GM18951 (cell line): ENCODE measurements at regions of chr4 and their contacts with region 1.

Region 1: GRCh38 chr4:129362674-129363274 is 266.8 kb downstream of the C4orf33 start:
- POLR2A ChIP-seq: no peak

Region 2: DNA sequence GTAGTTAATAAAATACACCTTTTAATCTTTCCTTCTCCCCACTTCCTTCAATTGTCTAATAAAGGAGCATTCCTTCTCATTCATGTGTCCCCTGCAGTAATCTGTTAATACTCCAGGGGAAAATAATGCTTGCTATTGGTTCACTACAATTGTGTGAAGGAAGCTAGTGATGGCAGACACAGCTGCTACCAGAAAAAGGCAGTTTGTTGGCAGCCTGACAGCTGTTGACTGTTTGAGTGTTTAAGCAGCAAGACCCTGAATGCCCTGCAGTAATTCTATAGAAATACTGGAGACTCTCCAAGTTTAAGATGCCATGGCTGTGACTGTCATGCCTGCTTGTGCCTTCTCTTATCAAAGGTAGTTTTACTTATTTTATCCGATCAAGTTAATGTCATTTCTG is 92.7 kb after region 1 on chr4:
- in situ Hi-C with region 1: no loop called
- POLR2A ChIP-seq: no peak

Region 3: DNA sequence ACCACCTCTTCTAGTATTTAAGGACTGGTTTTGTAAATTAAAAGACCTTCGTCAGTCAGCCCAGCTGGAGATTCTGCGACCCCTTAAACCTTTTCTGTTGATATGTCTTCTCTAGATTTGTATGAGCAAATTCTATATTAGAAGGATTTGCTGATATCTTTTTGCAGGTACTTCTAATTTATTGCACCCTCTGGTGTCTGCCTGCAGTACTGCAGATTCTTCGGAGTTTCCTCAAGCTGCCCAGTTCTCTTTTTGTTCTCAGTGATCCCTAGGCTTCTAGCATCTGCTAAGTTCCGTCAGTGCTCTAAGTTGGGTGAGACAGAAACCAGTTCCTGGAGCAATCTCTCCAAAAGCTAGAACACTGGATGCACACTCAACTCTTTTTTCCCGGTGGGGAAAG is 278.4 kb after region 1 on chr4:
- in situ Hi-C with region 1: loop called (anchors 25 kb)
- POLR2A ChIP-seq: no peak

Region 4: DNA sequence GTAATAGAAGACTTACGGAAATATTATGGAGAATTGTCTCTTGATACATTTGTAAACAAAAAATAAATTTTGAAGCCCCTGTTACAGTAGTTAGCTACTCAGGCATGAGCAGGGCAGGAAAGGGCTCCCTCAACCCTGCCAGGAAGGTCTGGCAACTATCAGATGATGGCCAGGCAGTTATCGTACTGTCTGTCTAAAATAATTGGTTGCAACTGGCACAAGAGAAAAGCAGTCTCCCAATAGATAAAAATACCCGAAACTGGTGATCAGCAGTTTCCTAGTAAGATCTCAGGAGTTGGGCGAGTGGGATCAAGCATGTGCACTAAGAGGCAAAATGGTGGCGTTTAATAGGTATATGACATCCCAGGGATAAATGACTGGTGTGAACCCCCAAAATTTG is 1069.5 kb after region 1 on chr4:
- in situ Hi-C with region 1: loop called (anchors 25 kb)
- POLR2A ChIP-seq: no peak